Uterus (tissue), 4 donors: ENCODE measurements at regions of chr4 and their contacts with region 1.

Region 1: GRCh38 chr4:147590249-147590920 is 26.8 kb upstream of the TMEM184C start:
- DNase-seq: peak; percentile 68 to 71
- H3K4me3 ChIP-seq: no peak overlapping the region
- H3K27ac ChIP-seq: peak overlapping the region; percentile 9 to 54
- H3K4me1 ChIP-seq: peaks cover 0 to 7% of the 10 kb centered on the region in 2 donors
- H3K27me3 ChIP-seq: no peaks in the 10 kb centered on the region
- CTCF ChIP-seq: peak; percentile 71 to 81 (median 80)
- POLR2A ChIP-seq: no peak

Region 2: DNA sequence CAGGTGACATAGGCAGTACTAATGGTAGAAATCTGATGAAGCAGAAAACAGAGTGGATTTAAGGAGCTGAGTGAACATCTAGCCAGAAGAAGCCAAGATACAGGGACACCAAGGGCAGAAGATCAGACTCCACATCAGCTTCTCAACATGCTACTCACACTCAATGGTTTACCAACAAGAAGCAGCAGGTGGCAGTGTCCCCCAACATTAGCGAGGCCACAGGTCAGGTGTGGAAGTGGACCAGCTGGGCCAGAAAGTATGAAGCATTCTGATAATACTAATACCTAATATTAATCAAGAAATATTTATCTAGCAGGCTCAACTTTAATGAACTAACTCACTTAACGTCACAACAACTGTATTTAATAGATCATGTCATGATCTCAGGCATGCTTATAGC is 571.3 kb before region 1 on chr4:
- intact Hi-C with region 1: loop called (anchors 5 kb)
- DNase-seq: peak; percentile 56 to 58
- H3K4me3 ChIP-seq: no peak overlapping the region
- H3K27ac ChIP-seq: no peak overlapping the region
- H3K4me1 ChIP-seq: no peaks in the 10 kb centered on the region
- H3K27me3 ChIP-seq: no peaks in the 10 kb centered on the region
- CTCF ChIP-seq: peak; percentile 33 to 61 (median 50)
- POLR2A ChIP-seq: no peak